Activated CD4-positive, alpha-beta T cell treated with anti-CD3 and anti-CD28 coated beads for 36 hours (primary cell): ENCODE measurements at regions of chr12 and their contacts with region 1.

Region 1: GRCh38 chr12:10673660-10674384 is at the start of gene STYK1:
- DNase-seq: peak; percentile 84
- ATAC-seq: peak; percentile 89
- H3K4me3 Mint-ChIP-seq: peak within 1 kb of the TSS; percentile 70
- H3K27ac Mint-ChIP-seq: peak within 1 kb of the TSS; percentile 77
- H3K4me1 Mint-ChIP-seq: peaks cover 28% of the 10 kb centered on the region
- H3K27me3 Mint-ChIP-seq: peaks cover 56% of the 10 kb centered on the region
- total RNA-seq, gene STYK1: not detected

Region 2: DNA sequence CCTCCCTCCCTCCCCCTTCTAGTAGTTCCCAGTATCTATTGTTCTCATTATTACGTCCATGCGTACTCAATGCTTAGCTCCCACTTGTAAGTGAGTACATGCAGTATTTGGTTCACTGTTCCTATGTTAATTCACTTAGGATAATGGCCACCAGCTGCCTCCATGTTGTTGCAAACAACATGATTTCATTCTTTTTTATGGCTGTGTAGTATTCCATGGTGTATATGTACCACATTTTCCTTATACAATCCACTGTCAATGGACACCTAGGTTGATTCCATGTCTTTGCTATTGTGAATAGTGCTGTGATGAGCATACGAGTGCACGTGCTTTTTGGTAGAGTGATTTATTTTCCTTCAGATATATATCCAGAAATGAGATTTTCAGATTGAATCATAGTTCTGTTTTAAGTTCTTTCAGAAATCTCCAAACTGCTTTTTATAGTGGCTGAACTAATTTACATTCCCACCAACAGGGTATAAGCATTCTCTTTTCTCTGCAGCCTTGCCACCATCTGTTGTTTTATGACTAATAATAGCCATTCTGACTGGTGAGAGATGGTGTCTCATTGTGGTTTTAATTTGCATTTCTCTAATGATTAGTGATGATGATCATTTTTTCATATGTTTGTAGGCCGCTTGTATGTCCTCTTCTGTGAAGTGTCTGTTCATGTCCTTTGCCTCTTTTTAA is 526.0 kb before region 1 on chr12:
- CTCF ChIA-PET with region 1: no interaction called
- POLR2A ChIA-PET with region 1: no interaction called
- intact Hi-C with region 1: loop called in 1 of 2 experiments (anchors 2 kb)
- DNase-seq: no peak
- ATAC-seq: peak; percentile 77
- H3K4me3 Mint-ChIP-seq: no peak overlapping the region
- H3K27ac Mint-ChIP-seq: no peak overlapping the region
- H3K4me1 Mint-ChIP-seq: peaks cover 7% of the 10 kb centered on the region
- H3K27me3 Mint-ChIP-seq: no peaks in the 10 kb centered on the region

Region 3: GRCh38 chr12:10331642-10332239 is 342.1 kb before region 1 on chr12:
- CTCF ChIA-PET with region 1: no interaction called
- POLR2A ChIA-PET with region 1: no interaction called
- intact Hi-C with region 1: loop called in 1 of 2 experiments (anchors 1 kb)
- DNase-seq: no peak
- ATAC-seq: peak; percentile 55
- H3K4me3 Mint-ChIP-seq: no peak overlapping the region
- H3K27ac Mint-ChIP-seq: no peak overlapping the region
- H3K4me1 Mint-ChIP-seq: peaks cover 2% of the 10 kb centered on the region
- H3K27me3 Mint-ChIP-seq: no peaks in the 10 kb centered on the region

Region 4: GRCh38 chr12:10562306-10562933 is 111.4 kb before region 1 on chr12:
- CTCF ChIA-PET with region 1: no interaction called
- POLR2A ChIA-PET with region 1: no interaction called
- intact Hi-C with region 1: loop called in 1 of 2 experiments (anchors 2 kb)
- DNase-seq: peak; percentile 22
- ATAC-seq: no peak
- H3K4me3 Mint-ChIP-seq: no peak overlapping the region
- H3K27ac Mint-ChIP-seq: no peak overlapping the region
- H3K4me1 Mint-ChIP-seq: peaks cover 4% of the 10 kb centered on the region
- H3K27me3 Mint-ChIP-seq: peaks cover 6% of the 10 kb centered on the region

Region 5: GRCh38 chr12:10721651-10722501 is 48.1 kb after region 1 on chr12:
- CTCF ChIA-PET with region 1: no interaction called
- POLR2A ChIA-PET with region 1: no interaction called
- intact Hi-C with region 1: loop called in 1 of 2 experiments (anchors 1 kb)
- DNase-seq: peak; percentile 74
- ATAC-seq: peak; percentile 68
- H3K4me3 Mint-ChIP-seq: peak overlapping the region; percentile 91
- H3K27ac Mint-ChIP-seq: peak overlapping the region; percentile 91
- H3K4me1 Mint-ChIP-seq: peaks cover 25% of the 10 kb centered on the region
- H3K27me3 Mint-ChIP-seq: peaks cover 29% of the 10 kb centered on the region